Mammary epithelial cell (primary cell): ENCODE measurements at regions of chr10 and their contacts with region 1.

Region 1: DNA sequence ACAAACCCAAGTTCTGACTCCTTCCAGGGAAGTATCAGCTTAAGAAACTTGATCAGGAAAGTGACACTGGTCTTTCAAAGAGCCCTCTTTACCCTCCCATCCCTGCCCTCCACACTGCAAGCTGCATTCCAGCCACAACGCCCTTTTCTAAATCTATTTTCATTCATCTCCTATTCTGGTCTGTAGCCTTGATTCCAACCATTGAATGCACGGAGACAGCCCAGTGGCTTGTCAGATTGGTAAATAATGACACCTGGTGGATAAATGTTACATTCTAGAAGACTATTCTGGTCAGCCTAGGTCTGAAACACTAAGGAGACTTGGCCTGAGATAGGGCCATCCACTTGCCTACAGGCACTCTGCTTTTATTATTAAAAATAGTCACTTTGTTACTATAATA is 20.9 kb downstream of the MORN4 start:
- DNase-seq: peak; percentile 62
- H3K4me3 ChIP-seq: no peak overlapping the region
- H3K27ac ChIP-seq: no peak overlapping the region
- H3K4me1 ChIP-seq: peaks cover 11% of the 10 kb centered on the region
- H3K27me3 ChIP-seq: no peaks in the 10 kb centered on the region
- CTCF ChIP-seq: peak; percentile 40 to 59

Region 2: GRCh38 chr10:97407211-97407951 is 205.0 kb before region 1 on chr10:
- CTCF ChIA-PET with region 1: no interaction called
- dilution Hi-C with region 1: no loop called
- in situ Hi-C with region 1: no loop called
- intact Hi-C with region 1: loop called (anchors 1 kb)
- DNase-seq: peak; percentile 78
- H3K4me3 ChIP-seq: no peak overlapping the region
- H3K27ac ChIP-seq: peak overlapping the region; percentile 9
- H3K4me1 ChIP-seq: peaks cover 33% of the 10 kb centered on the region
- H3K27me3 ChIP-seq: no peaks in the 10 kb centered on the region
- CTCF ChIP-seq: peak; percentile 64 to 71

Region 3: GRCh38 chr10:97445722-97446639 is 166.4 kb before region 1 on chr10 and contains the starts of genes EXOSC1 and ZDHHC16:
- CTCF ChIA-PET with region 1: no interaction called
- dilution Hi-C with region 1: no loop called
- in situ Hi-C with region 1: no loop called
- intact Hi-C with region 1: loop called (anchors 5 kb)
- DNase-seq: peak; percentile 96
- H3K4me3 ChIP-seq: peak within 1 kb of the TSS; percentile 68 to 82 (median 72)
- H3K27ac ChIP-seq: peak within 1 kb of the TSS; percentile 47
- H3K4me1 ChIP-seq: peaks cover 26% of the 10 kb centered on the region
- H3K27me3 ChIP-seq: no peaks in the 10 kb centered on the region
- CTCF ChIP-seq: peak in 1 of 2 donors; percentile 23
- total RNA-seq, gene EXOSC1: 35.8 to 37.0 TPM
- total RNA-seq, gene ZDHHC16: 46.3 to 61.3 TPM

Region 4: DNA sequence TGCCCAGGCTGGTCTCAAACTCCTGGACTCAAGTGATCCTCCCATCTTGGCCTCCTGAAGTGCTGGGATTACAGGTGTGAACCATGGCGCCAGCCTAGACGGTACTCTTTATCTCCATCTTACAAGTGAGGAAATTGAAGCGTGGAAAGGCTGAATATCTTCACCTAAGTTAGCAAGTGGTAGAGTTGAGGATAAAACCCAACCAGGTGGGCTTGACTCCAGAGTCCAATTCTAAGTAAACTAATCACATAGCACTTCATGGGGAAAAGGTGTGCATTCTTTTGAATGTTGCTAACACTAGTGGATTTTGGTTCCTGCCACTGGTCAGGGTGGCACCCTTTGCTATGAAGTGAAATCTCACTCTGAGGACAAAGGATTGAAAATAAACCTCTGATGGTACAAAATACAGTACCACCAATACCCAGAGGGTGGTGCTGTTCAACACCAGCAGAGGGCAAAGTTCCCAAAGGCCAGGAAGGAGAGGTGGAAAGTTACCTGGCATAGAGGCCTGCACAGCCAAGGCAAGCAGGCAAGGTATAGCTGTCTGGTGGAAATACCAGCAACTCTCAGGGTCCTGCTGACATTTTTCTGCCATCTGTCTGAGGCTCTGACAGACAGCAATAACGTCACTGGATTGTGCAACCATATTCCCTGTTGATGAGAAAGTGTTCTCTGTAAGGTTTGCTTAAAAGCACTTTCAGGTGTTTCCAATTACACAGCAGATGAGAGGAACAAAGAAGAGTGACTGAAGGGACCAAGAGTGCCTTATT is 148.8 kb before region 1 on chr10:
- CTCF ChIA-PET with region 1: no interaction called
- dilution Hi-C with region 1: no loop called
- in situ Hi-C with region 1: loop called in 1 of 2 experiments (anchors 5 kb)
- intact Hi-C with region 1: loop called (anchors 1 kb)
- DNase-seq: peak; percentile 65
- H3K4me3 ChIP-seq: no peak overlapping the region
- H3K27ac ChIP-seq: no peak overlapping the region
- H3K4me1 ChIP-seq: peaks cover 26% of the 10 kb centered on the region
- H3K27me3 ChIP-seq: no peaks in the 10 kb centered on the region
- CTCF ChIP-seq: peak; percentile 90 to 91

Region 5: GRCh38 chr10:97534746-97535367 is 77.5 kb before region 1 on chr10:
- CTCF ChIA-PET with region 1: no interaction called
- dilution Hi-C with region 1: no loop called
- in situ Hi-C with region 1: no loop called
- intact Hi-C with region 1: loop called (anchors 1 kb)
- DNase-seq: no peak
- H3K4me3 ChIP-seq: no peak overlapping the region
- H3K27ac ChIP-seq: no peak overlapping the region
- H3K4me1 ChIP-seq: peaks cover 13% of the 10 kb centered on the region
- H3K27me3 ChIP-seq: no peaks in the 10 kb centered on the region
- CTCF ChIP-seq: peak; percentile 45 to 73

Region 6: DNA sequence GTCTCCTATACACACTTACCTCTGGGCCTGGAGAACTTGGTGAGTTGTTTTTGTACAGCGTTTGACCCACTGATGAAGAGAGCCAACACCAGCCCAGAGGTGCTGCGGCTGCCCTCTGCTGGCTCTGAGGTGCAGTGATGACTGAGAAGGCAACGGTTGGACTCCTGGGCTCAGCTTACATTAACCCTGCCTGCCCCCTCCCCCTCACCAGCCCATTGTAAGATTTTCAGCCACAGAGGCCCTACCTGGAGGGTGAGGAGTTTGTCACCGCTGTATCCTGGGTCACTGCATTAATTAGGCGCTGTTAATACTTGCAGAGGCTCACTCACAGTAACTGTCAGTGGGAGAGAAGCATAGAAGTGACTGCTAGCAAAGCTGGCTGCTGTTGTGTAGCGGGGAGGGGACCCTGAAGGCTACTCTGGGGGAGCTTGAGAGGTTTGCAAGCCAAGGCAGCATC is 58.8 kb before region 1 on chr10:
- CTCF ChIA-PET with region 1: no interaction called
- dilution Hi-C with region 1: no loop called
- in situ Hi-C with region 1: no loop called
- intact Hi-C with region 1: loop called (anchors 1 kb)
- DNase-seq: peak; percentile 56
- H3K4me3 ChIP-seq: no peak overlapping the region
- H3K27ac ChIP-seq: no peak overlapping the region
- H3K4me1 ChIP-seq: peaks cover 35% of the 10 kb centered on the region
- H3K27me3 ChIP-seq: no peaks in the 10 kb centered on the region
- CTCF ChIP-seq: peak; percentile 89 to 98

Region 7: GRCh38 chr10:97572214-97572989 is 40.0 kb before region 1 on chr10 and contains the start of gene ANKRD2:
- CTCF ChIA-PET with region 1: interaction called, 5 read pairs
- dilution Hi-C with region 1: no loop called
- in situ Hi-C with region 1: no loop called
- intact Hi-C with region 1: loop called (anchors 1 kb)
- DNase-seq: peak; percentile 67
- H3K4me3 ChIP-seq: peak within 1 kb of the TSS in 2 of 3 experiments; percentile 5 to 12
- H3K27ac ChIP-seq: peak within 1 kb of the TSS; percentile 80
- H3K4me1 ChIP-seq: peaks cover 53% of the 10 kb centered on the region
- H3K27me3 ChIP-seq: no peaks in the 10 kb centered on the region
- CTCF ChIP-seq: peak; percentile 94 to 97
- total RNA-seq, gene ANKRD2: 0.47 to 0.83 TPM

Region 8: DNA sequence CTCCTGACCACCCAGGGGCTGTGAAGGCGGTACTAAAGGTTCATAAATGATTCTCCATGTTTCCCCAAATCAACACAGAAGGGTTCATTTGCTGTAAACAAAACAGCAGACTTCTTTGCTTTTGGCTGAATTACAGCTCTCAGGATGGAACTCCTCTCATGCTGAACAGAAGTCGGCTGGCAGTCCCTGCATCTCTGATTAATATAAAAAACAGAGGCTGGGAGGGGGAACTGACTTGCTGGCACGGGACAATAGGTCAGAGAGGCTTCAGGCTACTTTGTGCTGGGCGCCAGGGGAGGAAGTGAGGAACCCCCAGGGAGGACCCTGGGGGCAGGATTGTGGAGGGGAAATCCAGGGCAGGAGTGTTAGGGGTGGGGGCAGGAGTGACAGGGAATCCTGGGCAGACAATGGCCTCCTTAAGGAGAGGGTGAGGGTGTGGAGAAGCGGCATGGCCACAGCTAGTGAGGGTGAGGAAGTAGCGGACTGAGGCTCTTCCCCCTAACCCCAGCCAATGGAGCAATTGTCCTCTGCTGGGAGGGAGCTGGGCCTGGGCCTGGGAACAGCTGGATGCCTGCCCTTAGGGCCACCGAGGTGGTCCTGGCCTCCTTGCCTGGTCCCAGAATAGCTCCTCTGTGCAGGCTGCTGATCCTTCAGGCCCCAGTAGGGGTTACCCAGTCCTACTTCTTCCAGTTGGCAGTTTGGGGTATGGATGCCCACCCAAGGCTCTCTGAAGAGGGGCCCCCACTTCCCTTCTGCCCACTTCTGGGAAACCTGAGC is 168.6 kb after region 1 on chr10:
- CTCF ChIA-PET with region 1: no interaction called
- dilution Hi-C with region 1: no loop called
- in situ Hi-C with region 1: no loop called
- intact Hi-C with region 1: no loop called
- DNase-seq: no peak
- H3K4me3 ChIP-seq: no peak overlapping the region
- H3K27ac ChIP-seq: no peak overlapping the region
- H3K4me1 ChIP-seq: peaks cover 15% of the 10 kb centered on the region
- H3K27me3 ChIP-seq: no peaks in the 10 kb centered on the region
- CTCF ChIP-seq: no peak